SK-N-SH (cell line): ENCODE measurements at regions of chr14 and their contacts with region 1.

Region 1: DNA sequence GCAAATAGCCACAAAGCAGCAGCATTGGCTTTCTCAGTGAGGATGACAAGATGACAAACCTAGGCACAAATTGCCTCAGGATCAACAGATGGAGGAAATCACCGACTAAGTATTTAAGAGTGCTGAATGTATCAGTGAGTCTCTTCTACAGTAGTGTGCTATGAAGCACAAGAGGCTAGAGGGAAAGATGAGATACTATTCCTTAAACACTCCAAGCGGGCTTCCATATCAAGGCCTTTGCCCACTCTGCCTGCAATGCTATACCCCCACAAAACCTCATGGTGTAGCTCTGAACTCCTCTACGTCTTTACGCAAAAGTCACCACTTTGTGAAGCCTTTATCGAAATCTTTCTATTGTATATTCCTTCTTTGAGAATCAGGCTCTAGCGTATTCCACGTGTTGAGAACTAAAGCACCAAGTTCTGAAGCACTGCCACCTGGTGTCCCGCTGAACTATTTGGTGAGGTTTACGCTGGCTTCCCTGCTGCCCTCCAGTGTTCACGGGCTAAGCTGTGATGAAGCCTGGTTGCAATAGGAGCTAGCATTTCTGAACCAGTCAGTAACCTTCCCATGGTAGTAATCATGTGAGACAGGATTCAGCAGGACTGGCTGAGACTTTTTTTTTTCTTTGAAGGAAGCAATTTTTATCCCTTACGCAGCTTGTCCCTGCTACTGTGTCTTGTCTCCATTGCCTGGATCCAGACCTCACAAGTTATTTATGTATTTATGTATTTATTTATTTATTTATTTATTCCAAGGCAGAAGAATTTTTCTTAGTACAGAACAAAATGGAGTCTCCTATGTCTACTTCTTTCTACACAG is 426.5 kb upstream of the OR4E1 start:
- DNase-seq: peak; percentile 10
- H3K4me3 ChIP-seq: peak overlapping the region in 1 of 2 experiments; percentile 29; a peak in 1 of 4 replicates
- H3K27ac ChIP-seq: no peak overlapping the region
- H3K4me1 ChIP-seq: no peaks in the 10 kb centered on the region
- H3K27me3 ChIP-seq: no peaks in the 10 kb centered on the region
- CTCF ChIP-seq: peak; percentile 55
- EP300 ChIP-seq: no peak
- RAD21 ChIP-seq: peak; percentile 20; the same call in 1 of the 2 replicates

Region 2: GRCh38 chr14:22084393-22085281 is 15.5 kb before region 1 on chr14:
- CTCF ChIA-PET with region 1: interaction called, 13 read pairs
- POLR2A ChIA-PET with region 1: no interaction called
- DNase-seq: peak; percentile 27
- H3K4me3 ChIP-seq: no peak overlapping the region
- H3K27ac ChIP-seq: no peak overlapping the region
- H3K4me1 ChIP-seq: no peaks in the 10 kb centered on the region
- H3K27me3 ChIP-seq: no peaks in the 10 kb centered on the region
- CTCF ChIP-seq: peak; percentile 82
- EP300 ChIP-seq: no peak
- RAD21 ChIP-seq: peak; percentile 39